CD8-positive, alpha-beta T cell (primary cell): ENCODE measurements at regions of chr3 and their contacts with region 1.

Region 1: DNA sequence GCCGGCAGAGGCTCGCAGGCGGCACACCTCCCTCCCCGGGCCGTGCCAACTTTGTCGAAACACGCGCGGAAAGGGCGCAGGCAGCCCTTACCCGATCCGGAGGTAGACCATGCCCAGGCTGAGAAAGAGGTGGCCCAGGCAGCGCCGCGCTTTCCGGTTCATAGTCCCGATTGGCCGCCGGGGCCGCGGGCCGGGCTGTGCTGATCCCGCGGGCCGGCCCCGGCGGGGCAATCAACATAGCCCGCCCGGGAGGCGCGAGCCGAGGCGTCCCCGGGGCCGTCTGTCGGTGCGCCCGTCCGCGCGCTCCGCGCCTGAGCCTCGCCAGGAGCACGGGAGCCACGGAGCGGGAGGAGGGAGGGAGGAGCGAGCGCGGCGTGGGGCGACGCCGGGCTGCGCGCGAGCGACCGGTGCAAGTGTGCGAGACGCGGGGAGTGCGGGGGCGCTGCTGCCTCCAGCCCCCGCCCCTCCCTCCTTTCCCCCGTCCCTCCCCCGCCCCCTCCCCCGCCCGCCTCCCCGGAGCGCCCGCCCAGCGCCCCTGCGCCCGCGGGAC is at the start of gene WNT7A:
- DNase-seq: peak in 5 of 9 experiments; percentile 33 to 69 (median 65)
- ATAC-seq: peak; percentile 39
- H3K4me3 ChIP-seq: peak within 1 kb of the TSS; percentile 50 to 77
- H3K4me3 Mint-ChIP-seq: peak within 1 kb of the TSS; percentile 83
- H3K27ac ChIP-seq: peak within 1 kb of the TSS in 1 of 2 experiments; percentile 35
- H3K27ac Mint-ChIP-seq: peak within 1 kb of the TSS; percentile 22
- H3K4me1 ChIP-seq: peaks cover 24% of the 10 kb centered on the region
- H3K4me1 Mint-ChIP-seq: peaks cover 13% of the 10 kb centered on the region
- H3K27me3 ChIP-seq: peaks cover 0 to 13% of the 10 kb centered on the region in 2 experiments
- H3K27me3 Mint-ChIP-seq: peaks cover 29% of the 10 kb centered on the region
- CTCF ChIP-seq: no peak
- total RNA-seq, gene WNT7A: 5.1 to 5.4 TPM

Region 2: DNA sequence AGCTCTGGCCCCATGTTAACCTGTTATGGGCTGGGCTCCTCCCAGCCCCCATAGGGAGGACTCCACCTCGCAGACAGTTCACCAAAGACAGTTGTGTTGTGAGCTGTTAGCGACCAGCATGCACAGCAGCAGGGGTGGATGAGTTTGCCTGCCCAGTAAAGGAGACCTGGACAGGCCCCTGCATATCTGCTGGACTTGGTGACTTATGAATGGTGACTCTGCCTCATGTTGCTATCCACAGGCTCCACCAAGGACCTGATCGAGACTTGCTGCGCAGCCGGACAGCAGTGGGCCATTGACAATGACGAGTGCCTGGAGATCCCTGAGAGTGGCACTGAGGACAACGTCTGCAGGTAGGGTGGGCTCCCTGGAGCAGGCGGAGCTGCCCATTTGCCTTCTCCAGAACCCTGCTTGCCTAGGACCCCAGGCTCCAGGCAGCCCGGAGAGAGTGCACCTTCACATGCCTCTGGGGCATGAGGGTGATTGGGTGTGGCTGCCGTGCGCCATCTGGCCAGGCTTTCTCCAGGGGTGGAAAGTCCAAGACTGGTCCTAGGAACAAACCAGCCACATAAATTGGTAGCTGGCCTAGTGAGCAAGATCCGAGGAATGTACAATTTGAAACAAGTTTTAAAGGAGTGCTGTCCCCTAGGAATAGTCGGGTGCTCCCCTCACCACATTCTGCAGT is 271.8 kb before region 1 on chr3:
- CTCF ChIA-PET with region 1: no interaction called
- POLR2A ChIA-PET with region 1: no interaction called
- intact Hi-C with region 1: no loop called
- DNase-seq: no peak
- ATAC-seq: no peak
- H3K4me3 ChIP-seq: no peak overlapping the region
- H3K4me3 Mint-ChIP-seq: no peak overlapping the region
- H3K27ac ChIP-seq: no peak overlapping the region
- H3K27ac Mint-ChIP-seq: no peak overlapping the region
- H3K4me1 ChIP-seq: no peaks in the 10 kb centered on the region
- H3K4me1 Mint-ChIP-seq: no peaks in the 10 kb centered on the region
- H3K27me3 ChIP-seq: no peaks in the 10 kb centered on the region
- H3K27me3 Mint-ChIP-seq: peaks cover 3% of the 10 kb centered on the region
- CTCF ChIP-seq: no peak

Region 3: GRCh38 chr3:13748276-13748879 is 131.4 kb before region 1 on chr3:
- CTCF ChIA-PET with region 1: no interaction called
- POLR2A ChIA-PET with region 1: no interaction called
- intact Hi-C with region 1: no loop called
- DNase-seq: no peak
- ATAC-seq: no peak
- H3K4me3 ChIP-seq: no peak overlapping the region
- H3K4me3 Mint-ChIP-seq: no peak overlapping the region
- H3K27ac ChIP-seq: no peak overlapping the region
- H3K27ac Mint-ChIP-seq: no peak overlapping the region
- H3K4me1 ChIP-seq: no peaks in the 10 kb centered on the region
- H3K4me1 Mint-ChIP-seq: no peaks in the 10 kb centered on the region
- H3K27me3 ChIP-seq: peaks cover 0 to 2% of the 10 kb centered on the region in 2 experiments
- H3K27me3 Mint-ChIP-seq: peaks cover 11% of the 10 kb centered on the region
- CTCF ChIP-seq: no peak

Region 4: GRCh38 chr3:13866041-13866965 is 13.4 kb before region 1 on chr3:
- CTCF ChIA-PET with region 1: interaction called, 26 read pairs
- POLR2A ChIA-PET with region 1: interaction called, 12 read pairs
- intact Hi-C with region 1: loop called in 1 of 2 experiments (anchors 1 kb)
- DNase-seq: peak; percentile 24 to 82 (median 57)
- ATAC-seq: peak; percentile 85
- H3K4me3 ChIP-seq: peak overlapping the region; percentile 7 to 11
- H3K4me3 Mint-ChIP-seq: peak overlapping the region; percentile 68
- H3K27ac ChIP-seq: peak overlapping the region; percentile 66 to 74
- H3K27ac Mint-ChIP-seq: peak overlapping the region; percentile 93
- H3K4me1 ChIP-seq: peaks cover 46% of the 10 kb centered on the region
- H3K4me1 Mint-ChIP-seq: peaks cover 60% of the 10 kb centered on the region
- H3K27me3 ChIP-seq: no peaks in the 10 kb centered on the region
- H3K27me3 Mint-ChIP-seq: no peaks in the 10 kb centered on the region
- CTCF ChIP-seq: no peak